Esophagus muscularis mucosa (tissue), 4 donors: ENCODE measurements at regions of chr9 and their contacts with region 1.

Region 1: GRCh38 chr9:105064315-105065097 is 136.6 kb upstream of the ABCA1 start:
- DNase-seq: peak; percentile 97
- H3K4me3 ChIP-seq: peak overlapping the region in 3 of 4 donors; percentile 0 to 26 (median 3)
- H3K27ac ChIP-seq: peak overlapping the region; percentile 81 to 94 (median 88)
- H3K4me1 ChIP-seq: peaks cover 24 to 44% (median 43%) of the 10 kb centered on the region in 4 donors
- H3K27me3 ChIP-seq: no peaks in the 10 kb centered on the region
- CTCF ChIP-seq: no peak
- EP300 ChIP-seq: peak; percentile 56
- POLR2A ChIP-seq: no peak

Region 2: GRCh38 chr9:104991144-104991953 is 73.2 kb before region 1 on chr9:
- intact Hi-C with region 1: loop called (anchors 2 kb)
- DNase-seq: peak; percentile 97
- H3K4me3 ChIP-seq: peak overlapping the region; percentile 63 to 81 (median 74)
- H3K27ac ChIP-seq: peak overlapping the region; percentile 93 to 98 (median 96)
- H3K4me1 ChIP-seq: peaks cover 37 to 48% (median 46%) of the 10 kb centered on the region in 4 donors
- H3K27me3 ChIP-seq: no peaks in the 10 kb centered on the region
- CTCF ChIP-seq: no peak
- EP300 ChIP-seq: peak; percentile 26
- POLR2A ChIP-seq: peak; percentile 19

Region 3: DNA sequence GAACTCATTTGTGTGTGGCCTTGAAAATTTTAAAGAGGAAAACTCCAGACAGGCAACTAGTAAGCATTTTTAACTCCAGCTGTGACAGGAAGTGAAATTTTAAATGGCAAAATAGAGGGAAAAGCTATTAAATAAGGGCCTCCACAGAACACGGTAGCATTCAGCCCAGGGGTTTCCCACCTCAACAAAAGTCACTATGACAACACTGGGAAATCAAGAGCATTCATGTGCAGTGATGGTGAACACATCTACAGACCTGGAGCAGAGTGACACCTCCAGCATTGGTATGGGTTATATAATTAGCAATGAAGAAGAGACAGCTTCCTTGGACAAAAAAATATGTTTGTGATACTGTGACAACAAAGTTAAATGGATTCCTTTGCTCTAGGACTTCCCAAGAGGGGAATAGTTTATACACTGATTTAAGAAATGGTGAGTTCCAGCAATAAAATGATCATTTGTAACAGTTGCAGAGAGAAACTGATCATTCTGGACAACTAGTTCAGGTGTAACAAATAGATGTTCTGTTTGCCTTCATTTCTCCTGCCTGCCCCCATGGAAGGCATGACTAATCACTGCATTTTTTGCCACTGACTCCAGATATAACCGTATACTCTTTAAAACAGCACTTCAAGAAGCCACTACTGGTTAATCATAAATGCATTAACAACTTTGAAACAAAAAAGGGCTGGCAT is 86.6 kb after region 1 on chr9:
- intact Hi-C with region 1: loop called (anchors 5 kb)
- DNase-seq: no peak
- H3K4me3 ChIP-seq: no peak overlapping the region
- H3K27ac ChIP-seq: no peak overlapping the region
- H3K4me1 ChIP-seq: peaks cover 0 to 26% (median 24%) of the 10 kb centered on the region in 4 donors
- H3K27me3 ChIP-seq: no peaks in the 10 kb centered on the region
- CTCF ChIP-seq: no peak
- EP300 ChIP-seq: no peak
- POLR2A ChIP-seq: no peak